Psoas muscle (tissue), 8 donors: ENCODE measurements at regions of chr1 and their contacts with region 1.

Region 1: DNA sequence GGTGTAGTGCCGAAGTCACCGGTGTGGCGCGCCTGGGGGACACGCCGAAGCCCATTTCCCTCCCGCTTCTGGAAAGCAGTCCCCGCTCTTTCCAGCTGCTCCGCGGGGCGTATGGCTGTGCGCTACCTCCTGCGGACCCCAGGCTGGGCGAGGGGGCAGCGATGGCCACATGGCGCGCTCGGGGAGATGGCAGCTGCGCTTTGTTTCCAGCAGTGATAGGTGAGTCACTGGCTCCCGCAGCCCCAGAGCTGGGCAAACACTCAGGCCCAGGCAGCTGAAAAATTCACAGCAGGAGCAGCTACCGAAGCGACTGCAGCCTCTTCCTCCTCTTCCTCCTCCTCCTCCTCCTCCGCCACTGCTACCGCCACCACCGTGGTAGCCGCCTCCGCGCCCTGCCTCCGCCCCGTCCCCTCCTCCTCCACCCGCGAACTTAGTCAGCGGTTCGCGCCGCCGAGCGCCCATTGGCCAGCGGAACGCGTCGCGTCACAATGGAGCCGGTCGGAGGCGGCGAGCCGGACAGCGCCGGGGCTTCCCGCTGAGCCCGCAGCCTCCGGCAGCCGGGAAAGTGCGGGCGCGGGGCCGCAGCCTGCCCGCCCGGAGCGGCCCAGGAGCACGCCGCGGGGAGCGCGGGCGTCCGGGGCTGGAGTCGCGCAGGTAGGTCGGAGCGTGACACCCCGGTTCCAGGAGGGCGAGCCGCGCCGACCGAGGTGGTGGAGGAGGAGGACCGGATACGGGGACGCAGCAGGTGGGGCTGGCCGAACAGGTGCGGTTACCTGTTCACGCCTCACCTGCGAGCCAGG is at the start of gene LRRC8B:
- DNase-seq: peak; percentile 91 to 95
- ATAC-seq: peak; percentile 95 to 97 (median 95)
- H3K4me3 ChIP-seq: peak within 1 kb of the TSS; percentile 99
- H3K27ac ChIP-seq: peak within 1 kb of the TSS; percentile 98
- H3K4me1 ChIP-seq: peaks cover 34% of the 10 kb centered on the region
- H3K27me3 ChIP-seq: no peaks in the 10 kb centered on the region
- CTCF ChIP-seq: no peak
- total RNA-seq, gene LRRC8B: 10.3 to 21.6 (median 13.7) TPM

Region 2: GRCh38 chr1:89556726-89557444 is 32.3 kb after region 1 on chr1:
- intact Hi-C with region 1: loop called in 1 of 2 experiments (anchors 5 kb)
- DNase-seq: no peak
- ATAC-seq: peak in 1 of 4 donors; percentile 51
- H3K4me3 ChIP-seq: no peak overlapping the region
- H3K27ac ChIP-seq: no peak overlapping the region
- H3K4me1 ChIP-seq: peaks cover 32% of the 10 kb centered on the region
- H3K27me3 ChIP-seq: no peaks in the 10 kb centered on the region
- CTCF ChIP-seq: no peak

Region 3: DNA sequence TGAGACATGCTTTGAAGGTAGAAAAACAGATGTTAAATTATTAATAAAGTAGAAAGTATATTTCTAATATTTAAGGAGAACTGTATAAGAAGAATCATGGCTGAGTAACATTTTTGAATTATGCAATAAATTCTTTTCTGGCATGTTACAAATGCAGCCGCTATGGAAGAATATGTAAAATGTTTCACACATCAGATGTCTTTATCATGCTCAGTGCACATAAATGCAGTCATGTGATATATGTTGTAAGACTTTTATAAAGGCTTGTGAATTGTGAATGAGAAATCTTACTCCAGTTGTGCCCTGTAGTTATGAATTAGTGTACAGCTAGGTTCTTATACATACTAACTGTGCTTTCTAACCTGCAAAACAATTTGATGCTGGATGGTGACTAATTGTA is 53.6 kb after region 1 on chr1:
- intact Hi-C with region 1: loop called in 1 of 2 experiments (anchors 10 kb)
- DNase-seq: no peak
- ATAC-seq: no peak
- H3K4me3 ChIP-seq: no peak overlapping the region
- H3K27ac ChIP-seq: no peak overlapping the region
- H3K4me1 ChIP-seq: no peaks in the 10 kb centered on the region
- H3K27me3 ChIP-seq: no peaks in the 10 kb centered on the region
- CTCF ChIP-seq: no peak

Region 4: DNA sequence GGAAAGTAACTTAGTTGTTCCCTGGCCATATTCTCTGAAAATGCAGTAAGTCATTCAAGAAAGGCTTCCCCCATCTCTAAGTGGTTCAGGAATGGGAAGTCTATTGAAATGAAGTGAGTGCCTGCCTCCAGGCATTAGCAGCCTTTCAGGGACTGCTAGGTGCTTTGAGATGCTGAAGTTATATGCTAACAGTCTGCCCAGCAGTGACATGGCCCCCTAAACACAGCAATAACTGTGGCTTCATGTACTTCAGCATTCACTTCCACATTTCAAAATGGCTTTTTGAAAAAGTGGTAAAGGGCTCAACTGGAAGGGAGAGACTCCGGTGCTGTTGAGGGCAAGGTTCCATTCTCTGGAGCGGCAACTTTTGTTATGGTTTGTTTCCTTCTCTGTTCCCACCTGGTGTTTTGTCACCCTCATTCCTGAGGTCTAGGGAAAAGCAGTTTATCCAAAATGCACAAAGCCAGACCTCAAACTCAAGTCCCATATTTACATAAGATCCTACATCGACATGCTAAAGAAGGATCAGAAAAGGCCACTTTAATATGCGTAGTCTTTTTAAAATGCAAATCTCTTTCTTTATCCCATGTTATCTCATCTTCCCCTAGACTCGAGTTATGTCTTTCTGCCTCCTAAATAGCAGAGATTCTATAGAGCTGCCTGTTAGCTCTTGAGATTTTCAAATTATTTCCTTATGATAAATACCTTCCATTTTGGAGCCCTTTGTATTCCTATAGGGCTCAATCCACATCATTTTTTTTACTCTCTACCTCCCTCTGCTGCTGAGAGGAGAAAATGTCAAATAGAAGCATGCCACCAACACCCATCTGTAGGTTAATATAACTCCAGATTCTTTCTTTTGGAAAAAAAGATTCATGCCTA is 74.1 kb after region 1 on chr1:
- intact Hi-C with region 1: loop called in 1 of 2 experiments (anchors 5 kb)
- DNase-seq: no peak
- ATAC-seq: peak; percentile 55 to 86 (median 67)
- H3K4me3 ChIP-seq: no peak overlapping the region
- H3K27ac ChIP-seq: no peak overlapping the region
- H3K4me1 ChIP-seq: no peaks in the 10 kb centered on the region
- H3K27me3 ChIP-seq: no peaks in the 10 kb centered on the region
- CTCF ChIP-seq: peak; percentile 73

Region 5: GRCh38 chr1:89780721-89781120 is 256.2 kb after region 1 on chr1:
- intact Hi-C with region 1: no loop called
- DNase-seq: no peak
- ATAC-seq: no peak
- H3K4me3 ChIP-seq: no peak overlapping the region
- H3K27ac ChIP-seq: no peak overlapping the region
- H3K4me1 ChIP-seq: no peaks in the 10 kb centered on the region
- H3K27me3 ChIP-seq: no peaks in the 10 kb centered on the region
- CTCF ChIP-seq: peak; percentile 4

Region 6: GRCh38 chr1:89908672-89909436 is 384.3 kb after region 1 on chr1:
- intact Hi-C with region 1: no loop called
- DNase-seq: no peak
- ATAC-seq: peak; percentile 66 to 81 (median 68)
- H3K4me3 ChIP-seq: peak overlapping the region; percentile 5
- H3K27ac ChIP-seq: peak overlapping the region; percentile 72
- H3K4me1 ChIP-seq: peaks cover 63% of the 10 kb centered on the region
- H3K27me3 ChIP-seq: no peaks in the 10 kb centered on the region
- CTCF ChIP-seq: no peak